H1 (cell line): ENCODE measurements at regions of chr17 and their contacts with region 1.

Region 1: GRCh38 chr17:68172461-68172954 is 75.3 kb upstream of the AMZ2 start:
- DNase-seq: peak in 1 of 2 experiments; percentile 87
- H3K4me3 ChIP-seq: no peak overlapping the region
- H3K27ac ChIP-seq: no peak overlapping the region
- H3K4me1 ChIP-seq: no peaks in the 10 kb centered on the region
- H3K27me3 ChIP-seq: no peaks in the 10 kb centered on the region
- CTCF ChIP-seq: peak; percentile 80 to 90 (median 86)
- EP300 ChIP-seq: no peak
- POLR2A ChIP-seq: no peak
- RAD21 ChIP-seq: peak; percentile 91 to 93

Region 2: DNA sequence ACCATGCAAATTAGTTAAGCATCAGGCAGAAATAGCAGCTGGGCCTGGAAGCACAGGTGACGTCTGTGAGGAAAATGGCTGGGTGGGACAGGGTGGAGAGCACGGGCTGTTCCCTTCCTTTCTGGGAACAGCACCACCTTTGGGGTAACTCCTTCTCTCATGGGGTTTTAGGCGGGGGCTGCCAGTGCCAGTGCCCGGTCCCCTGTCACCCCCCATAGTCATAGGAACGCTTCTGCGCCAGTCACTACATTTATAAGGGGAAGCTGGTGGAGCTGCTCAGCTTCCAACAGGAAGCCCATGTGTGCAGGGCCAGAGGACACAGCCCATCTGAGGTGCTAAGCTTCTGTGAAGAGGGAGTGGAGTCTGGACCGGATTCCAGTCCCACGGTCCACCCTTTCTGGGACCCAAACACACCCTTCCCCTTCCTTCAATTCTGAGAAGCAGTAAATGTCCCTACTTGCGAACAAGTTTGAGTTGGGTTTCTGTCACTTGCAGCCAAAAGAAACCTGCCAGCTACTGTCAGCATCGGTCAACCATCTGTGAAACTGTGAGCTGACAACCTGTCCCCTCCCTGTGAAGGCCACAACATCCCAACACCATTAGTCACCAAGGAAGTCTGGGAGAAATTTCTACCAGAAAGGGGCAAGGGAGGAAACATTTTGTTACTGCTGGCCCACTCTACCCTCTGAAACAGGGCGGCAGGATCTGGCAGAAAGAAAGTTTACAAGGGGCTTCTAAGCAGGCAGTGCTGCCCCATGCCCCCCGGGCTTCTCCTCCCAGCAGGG is 10.7 kb before region 1 on chr17:
- CTCF ChIA-PET with region 1: interaction called, 26 read pairs
- POLR2A ChIA-PET with region 1: no interaction called
- DNase-seq: no peak
- H3K4me3 ChIP-seq: no peak overlapping the region
- H3K27ac ChIP-seq: no peak overlapping the region
- H3K4me1 ChIP-seq: no peaks in the 10 kb centered on the region
- H3K27me3 ChIP-seq: no peaks in the 10 kb centered on the region
- CTCF ChIP-seq: no peak
- EP300 ChIP-seq: no peak
- POLR2A ChIP-seq: no peak
- RAD21 ChIP-seq: no peak

Region 3: DNA sequence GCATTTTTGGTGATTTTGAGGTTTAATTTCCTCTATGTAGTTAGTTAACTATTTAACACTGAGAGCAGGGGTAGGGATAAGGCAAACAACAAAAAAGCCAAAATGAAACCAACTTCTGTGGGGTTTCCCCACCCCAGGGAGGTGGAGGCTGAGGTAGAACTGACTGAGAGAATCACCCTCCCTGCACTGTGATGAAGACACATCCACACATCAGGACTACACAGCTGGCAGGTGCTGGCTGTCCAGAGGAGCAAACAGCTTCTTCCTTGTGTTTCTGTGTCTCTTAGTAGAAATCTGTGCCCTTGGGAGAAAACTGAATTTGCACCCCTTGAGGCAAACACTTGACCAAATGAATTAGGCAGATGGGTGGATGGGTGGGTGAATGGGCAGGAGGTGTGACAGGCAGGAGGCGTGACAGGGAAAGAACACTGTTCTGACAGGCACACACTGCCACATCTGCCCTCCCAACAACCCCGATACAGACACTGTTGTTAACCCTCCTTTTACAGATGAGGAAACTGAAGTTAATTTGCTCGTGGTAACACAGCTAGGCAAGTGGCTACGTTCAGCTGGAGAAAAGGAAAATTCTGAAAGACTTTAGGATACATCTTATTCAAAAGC is 12.4 kb after region 1 on chr17:
- CTCF ChIA-PET with region 1: interaction called, 26 read pairs
- POLR2A ChIA-PET with region 1: no interaction called
- DNase-seq: no peak
- H3K4me3 ChIP-seq: no peak overlapping the region
- H3K27ac ChIP-seq: no peak overlapping the region
- H3K4me1 ChIP-seq: peaks cover 0 to 4% (median 2%) of the 10 kb centered on the region in 4 experiments; a peak in 3 of 7 replicates
- H3K27me3 ChIP-seq: no peaks in the 10 kb centered on the region
- CTCF ChIP-seq: no peak
- EP300 ChIP-seq: no peak
- POLR2A ChIP-seq: no peak
- RAD21 ChIP-seq: no peak